K562 (cell line): ENCODE measurements at regions of chr1 and their contacts with region 1.

Region 1: GRCh38 chr1:209576798-209577197 is 6.7 kb upstream of the CAMK1G start:
- DNase-seq: peak; percentile 76 to 83 (median 82)
- ATAC-seq: peak; percentile 99
- H3K4me3 ChIP-seq: no peak overlapping the region
- H3K27ac ChIP-seq: no peak overlapping the region
- H3K4me1 ChIP-seq: no peaks in the 10 kb centered on the region
- H3K27me3 ChIP-seq: peaks cover 3% of the 10 kb centered on the region in 2 experiments; a peak in 2 of 5 replicates
- CTCF ChIP-seq: peak; percentile 85 to 96 (median 94)
- EP300 ChIP-seq: no peak
- POLR2A ChIP-seq: no peak
- RAD21 ChIP-seq: peak; percentile 88 to 94

Region 2: DNA sequence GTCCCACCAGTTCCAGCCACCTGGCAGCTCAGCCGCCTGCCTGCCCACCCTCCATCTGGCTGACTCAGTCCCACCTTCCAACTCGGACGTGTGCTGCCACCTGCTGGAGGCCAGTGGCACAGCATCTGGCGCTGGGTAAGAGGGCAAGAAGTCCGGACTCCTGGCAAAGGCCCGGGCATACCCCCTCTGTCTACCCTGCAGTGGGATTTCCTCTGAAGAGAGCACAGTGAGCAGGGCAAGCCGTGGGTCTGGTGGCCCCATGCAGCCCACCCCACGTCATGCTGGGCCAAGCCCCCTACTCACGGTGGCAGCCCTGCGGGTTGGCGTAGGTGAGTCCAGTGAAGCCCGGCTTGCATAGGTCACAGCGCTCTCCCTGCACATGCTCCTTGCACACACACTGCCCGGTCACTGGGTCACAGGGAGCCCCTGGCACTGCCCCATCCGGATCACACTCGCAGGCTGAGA is 51.0 kb after region 1 on chr1:
- CTCF ChIA-PET with region 1: interaction called, 7 read pairs
- POLR2A ChIA-PET with region 1: no interaction called
- in situ Hi-C with region 1: no loop called
- intact Hi-C with region 1: loop called (anchors 2 kb)
- DNase-seq: peak; percentile 75 to 86 (median 78)
- ATAC-seq: peak; percentile 91
- H3K4me3 ChIP-seq: no peak overlapping the region
- H3K27ac ChIP-seq: no peak overlapping the region
- H3K4me1 ChIP-seq: peaks cover 0 to 22% of the 10 kb centered on the region in 2 experiments; a peak in 2 of 5 replicates
- H3K27me3 ChIP-seq: peaks cover 20 to 78% of the 10 kb centered on the region in 2 experiments; a peak in 4 of 5 replicates
- CTCF ChIP-seq: peak; percentile 89 to 97 (median 90)
- EP300 ChIP-seq: no peak
- POLR2A ChIP-seq: no peak
- RAD21 ChIP-seq: peak; percentile 71 to 82